MCF 10A (cell line): ENCODE measurements at regions of chr1 and their contacts with region 1.

Region 1: DNA sequence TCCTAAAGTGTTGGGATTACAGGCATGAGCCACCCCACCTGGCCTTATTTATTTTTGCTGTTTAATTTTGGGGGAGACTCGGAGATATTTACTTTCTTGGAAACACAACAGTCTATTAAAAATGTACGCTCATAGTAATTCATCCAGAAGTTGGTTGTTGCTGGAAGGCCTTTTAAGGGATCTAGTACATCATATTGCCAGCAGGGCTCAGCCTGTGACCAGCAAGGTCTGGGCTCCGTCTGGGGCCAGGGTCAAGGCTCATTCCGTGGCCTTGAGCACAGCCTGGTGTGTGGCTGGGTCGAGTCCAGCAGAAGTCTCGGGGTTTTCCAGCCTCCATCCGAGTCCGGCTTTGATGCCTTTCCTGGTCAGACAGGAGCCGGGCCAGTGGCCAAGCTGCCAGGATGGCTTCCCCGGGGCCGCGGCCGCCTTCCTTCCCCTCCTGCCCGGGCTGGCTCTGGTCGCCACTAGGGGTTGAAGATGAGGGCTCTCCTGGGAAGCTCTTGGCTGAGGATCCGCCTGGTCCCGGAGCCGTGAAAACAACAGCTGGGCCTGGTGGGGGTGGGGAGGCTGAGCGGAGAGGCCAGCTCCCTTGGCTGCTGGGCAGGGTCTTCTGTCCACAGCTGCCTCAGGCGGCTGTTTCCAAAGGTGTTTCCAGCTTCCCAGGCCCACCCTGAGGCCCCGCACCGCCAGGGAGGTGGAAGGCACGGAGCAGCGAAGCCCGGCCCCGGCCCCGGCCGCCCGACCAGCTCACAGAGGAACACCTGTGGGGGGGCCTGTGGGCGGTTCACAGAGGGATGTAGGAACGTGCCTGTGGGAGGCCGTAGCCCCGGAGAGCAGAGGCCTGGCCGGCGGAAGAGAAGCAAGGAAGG is 5.1 kb upstream of the VWA1 start:
- DNase-seq: no peak
- H3K4me3 Mint-ChIP-seq: no peak overlapping the region
- H3K27ac Mint-ChIP-seq: no peak overlapping the region
- H3K4me1 Mint-ChIP-seq: no peaks in the 10 kb centered on the region
- H3K27me3 Mint-ChIP-seq: no peaks in the 10 kb centered on the region
- CTCF ChIP-seq: no peak

Region 2: DNA sequence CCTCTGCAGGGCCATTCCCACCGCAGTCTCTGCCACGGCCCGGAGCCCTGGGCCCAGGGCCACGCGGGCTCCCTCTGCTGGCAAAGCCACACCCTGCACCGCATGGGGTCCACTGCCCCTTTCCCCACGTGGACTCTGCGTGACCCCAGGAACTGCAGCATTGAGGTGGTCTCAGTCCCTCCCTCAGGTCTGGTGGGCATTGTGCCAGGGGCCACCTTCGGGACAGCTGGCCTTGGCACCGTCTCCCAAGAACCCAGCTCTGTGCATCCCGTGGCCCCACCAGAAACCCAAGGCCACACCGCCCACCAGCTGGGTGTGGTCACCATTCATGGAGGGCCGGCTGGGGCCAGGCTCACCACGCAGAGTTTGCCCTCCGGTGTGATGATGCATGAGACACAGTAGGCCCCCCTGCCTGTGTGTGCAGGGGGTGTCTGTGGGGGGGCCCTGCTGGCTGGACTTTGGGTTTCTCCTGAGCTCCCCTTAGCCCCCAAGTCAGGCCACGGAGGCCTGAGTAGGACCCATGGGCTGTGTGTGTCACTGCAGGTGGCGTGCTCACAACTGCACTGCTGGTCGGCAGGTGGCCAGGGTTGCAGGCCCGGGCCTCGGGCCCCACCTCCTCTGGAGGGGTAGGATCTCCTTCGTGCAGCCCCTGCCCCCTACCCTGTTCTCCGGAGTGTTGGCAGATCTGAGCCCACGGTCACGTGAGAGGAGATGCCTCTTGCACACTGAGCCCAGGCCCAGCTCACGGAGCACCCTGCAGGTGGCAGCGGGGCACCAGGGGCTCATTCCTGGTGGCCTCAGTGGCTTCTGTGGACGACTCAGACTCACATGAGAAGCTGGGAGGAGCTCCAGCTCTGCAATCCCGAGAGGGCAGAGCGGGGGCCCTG is 10.9 kb after region 1 on chr1:
- CTCF ChIA-PET with region 1: interaction called, 11 read pairs
- POLR2A ChIA-PET with region 1: interaction called, 3 read pairs
- intact Hi-C with region 1: no loop called
- DNase-seq: peak; percentile 42
- H3K4me3 Mint-ChIP-seq: no peak overlapping the region
- H3K27ac Mint-ChIP-seq: no peak overlapping the region
- H3K4me1 Mint-ChIP-seq: no peaks in the 10 kb centered on the region
- H3K27me3 Mint-ChIP-seq: no peaks in the 10 kb centered on the region
- CTCF ChIP-seq: peak; percentile 89

Region 3: DNA sequence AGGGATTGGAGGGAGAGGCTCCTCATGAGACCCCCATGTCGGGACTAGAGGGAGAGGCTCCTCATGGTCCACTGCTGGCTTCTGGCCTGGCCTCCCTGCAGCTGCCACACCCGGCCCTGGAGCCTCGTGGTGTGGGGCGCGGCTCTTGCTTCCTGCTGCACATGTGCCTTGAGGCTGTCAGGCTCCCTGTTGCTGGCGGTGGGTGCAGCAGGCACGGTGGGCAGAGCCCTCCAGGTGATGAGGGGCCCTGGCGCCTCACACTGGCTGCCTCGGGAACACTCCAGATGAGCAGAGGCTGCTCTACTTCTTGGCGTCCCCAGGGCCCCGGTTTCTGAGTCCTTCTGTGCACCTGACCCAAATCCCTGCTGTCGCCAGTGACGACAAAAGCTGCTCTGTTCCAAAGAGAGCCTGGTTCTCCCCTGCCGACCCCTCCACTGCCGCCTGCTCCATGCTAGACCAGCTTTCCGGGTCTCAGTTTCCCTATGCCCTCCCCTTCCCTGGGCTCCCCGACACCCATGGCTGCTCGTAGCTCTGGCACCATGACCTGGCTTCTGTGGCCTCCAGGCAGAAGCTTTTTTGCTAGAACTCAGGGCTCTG is 31.5 kb after region 1 on chr1:
- CTCF ChIA-PET with region 1: no interaction called
- POLR2A ChIA-PET with region 1: no interaction called
- intact Hi-C with region 1: no loop called
- DNase-seq: no peak
- H3K4me3 Mint-ChIP-seq: peak overlapping the region; percentile 25
- H3K27ac Mint-ChIP-seq: peak overlapping the region; percentile 19
- H3K4me1 Mint-ChIP-seq: no peaks in the 10 kb centered on the region
- H3K27me3 Mint-ChIP-seq: no peaks in the 10 kb centered on the region
- CTCF ChIP-seq: no peak

Region 4: GRCh38 chr1:1599030-1599919 is 168.9 kb after region 1 on chr1:
- CTCF ChIA-PET with region 1: no interaction called
- POLR2A ChIA-PET with region 1: no interaction called
- intact Hi-C with region 1: no loop called
- DNase-seq: no peak
- H3K4me3 Mint-ChIP-seq: peak overlapping the region; percentile 62
- H3K27ac Mint-ChIP-seq: no peak overlapping the region
- H3K4me1 Mint-ChIP-seq: no peaks in the 10 kb centered on the region
- H3K27me3 Mint-ChIP-seq: no peaks in the 10 kb centered on the region
- CTCF ChIP-seq: no peak